Testis (tissue), 5 donors: ENCODE measurements at regions of chr17 and their contacts with region 1.

Region 1: GRCh38 chr17:74296548-74296936 is 22.5 kb downstream of the DNAI2 start:
- DNase-seq: peak; percentile 94
- H3K4me3 ChIP-seq: no peak overlapping the region
- H3K27ac ChIP-seq: peak overlapping the region; percentile 2 to 24
- H3K4me1 ChIP-seq: peaks cover 13% of the 10 kb centered on the region
- H3K27me3 ChIP-seq: no peaks in the 10 kb centered on the region
- CTCF ChIP-seq: peak; percentile 50 to 71 (median 69)
- POLR2A ChIP-seq: no peak

Region 2: GRCh38 chr17:74212913-74213791 is 83.4 kb before region 1 on chr17 and contains the start of gene TTYH2:
- intact Hi-C with region 1: loop called (anchors 5 kb)
- DNase-seq: peak; percentile 91
- H3K4me3 ChIP-seq: peak within 1 kb of the TSS; percentile 49 to 68
- H3K27ac ChIP-seq: peak within 1 kb of the TSS; percentile 64 to 83
- H3K4me1 ChIP-seq: peaks cover 37% of the 10 kb centered on the region
- H3K27me3 ChIP-seq: no peaks in the 10 kb centered on the region
- CTCF ChIP-seq: peak in 2 of 3 experiments; percentile 17 to 31
- POLR2A ChIP-seq: no peak
- total RNA-seq, gene TTYH2: 69.7 to 73.5 TPM

Region 3: DNA sequence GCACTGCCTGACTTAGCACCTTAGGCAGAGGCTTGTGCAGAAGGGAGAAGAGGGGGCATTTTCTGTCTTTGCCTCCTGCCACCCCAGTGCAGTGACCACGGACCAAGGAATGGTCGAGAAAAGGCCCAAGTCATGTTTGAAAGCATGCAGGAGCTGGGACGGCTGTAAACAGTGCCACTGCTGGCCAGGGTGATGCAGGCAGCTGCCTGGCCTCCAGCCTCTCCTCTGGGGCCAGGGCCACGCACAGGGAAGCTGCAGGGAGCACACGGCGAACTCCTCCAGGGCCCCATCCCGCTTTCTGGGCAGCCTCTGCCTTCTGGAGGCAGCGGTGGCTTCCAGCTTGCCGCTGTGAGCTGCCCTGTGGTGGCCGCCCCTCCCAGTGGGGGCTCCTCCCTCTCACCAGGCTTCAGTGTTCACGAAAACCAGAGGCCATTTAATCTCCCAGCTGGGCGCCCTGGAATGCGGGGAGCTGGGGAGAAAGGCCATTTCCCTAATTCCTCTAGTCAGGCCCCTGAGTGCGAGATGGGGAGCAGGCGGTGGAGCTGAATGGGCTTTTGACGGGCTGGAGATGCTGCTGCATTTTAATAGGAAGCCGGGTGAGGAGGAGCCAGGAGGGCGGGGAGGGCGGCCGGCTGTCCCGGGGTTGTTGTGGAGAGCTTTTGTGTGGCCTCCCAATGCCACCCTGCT is 51.3 kb before region 1 on chr17:
- intact Hi-C with region 1: no loop called
- DNase-seq: no peak
- H3K4me3 ChIP-seq: no peak overlapping the region
- H3K27ac ChIP-seq: no peak overlapping the region
- H3K4me1 ChIP-seq: peaks cover 19% of the 10 kb centered on the region
- H3K27me3 ChIP-seq: no peaks in the 10 kb centered on the region
- CTCF ChIP-seq: no peak
- POLR2A ChIP-seq: no peak

Region 4: DNA sequence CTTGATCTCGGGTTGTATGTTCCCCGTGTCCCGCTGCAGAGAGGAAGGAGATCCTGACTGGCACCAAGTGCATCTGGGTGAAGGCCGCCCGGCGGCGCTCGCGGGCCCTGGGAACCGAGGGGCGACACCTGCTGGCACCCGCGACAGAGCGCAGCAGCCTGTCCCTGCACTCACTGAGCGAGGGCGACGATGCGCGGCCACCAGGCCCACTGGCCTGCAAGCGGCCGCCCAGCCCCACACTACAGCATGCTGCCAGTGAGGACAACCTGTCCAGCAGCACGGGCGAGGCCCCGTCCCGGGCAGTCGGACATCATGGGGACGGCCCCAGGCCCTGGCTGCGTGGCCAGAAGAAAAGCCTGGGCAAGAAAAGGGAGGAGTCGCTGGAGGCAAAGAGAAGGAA is 57.6 kb after region 1 on chr17:
- intact Hi-C with region 1: no loop called
- DNase-seq: peak; percentile 74
- H3K4me3 ChIP-seq: no peak overlapping the region
- H3K27ac ChIP-seq: no peak overlapping the region
- H3K4me1 ChIP-seq: no peaks in the 10 kb centered on the region
- H3K27me3 ChIP-seq: no peaks in the 10 kb centered on the region
- CTCF ChIP-seq: peak; percentile 32 to 59 (median 41)
- POLR2A ChIP-seq: no peak